Ovary (tissue), 10 donors: ENCODE measurements at regions of chrX and their contacts with region 1.

Region 1: DNA sequence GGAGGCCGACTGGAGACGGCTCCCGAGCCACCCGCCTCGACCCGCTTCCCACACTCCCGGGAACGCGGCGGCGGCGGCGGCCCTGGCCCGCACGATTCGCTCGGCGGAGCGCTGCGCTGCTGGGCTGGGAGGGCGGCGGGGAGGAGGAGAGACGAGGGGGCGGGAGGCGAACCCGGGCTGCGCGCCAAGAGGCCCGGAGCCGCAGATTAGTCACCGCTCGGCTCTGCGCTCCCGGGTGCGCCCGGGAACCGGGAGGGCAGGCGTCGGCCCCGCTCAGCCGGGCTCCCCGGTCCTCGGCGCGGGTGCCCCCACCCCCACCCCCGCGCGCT is 11.2 kb upstream of the BCOR start:
- DNase-seq: peak; percentile 82 to 86 (median 85)
- H3K4me3 ChIP-seq: peak overlapping the region; percentile 42
- H3K27ac ChIP-seq: peak overlapping the region; percentile 90 to 96
- H3K4me1 ChIP-seq: peaks cover 1% of the 10 kb centered on the region
- H3K27me3 ChIP-seq: no peaks in the 10 kb centered on the region
- CTCF ChIP-seq: no peak
- EP300 ChIP-seq: no peak
- POLR2A ChIP-seq: peak; percentile 51

Region 2: GRCh38 chrX:40146262-40147125 is 37.6 kb after region 1 on chrX:
- intact Hi-C with region 1: loop called (anchors 5 kb)
- DNase-seq: peak; percentile 51 to 62 (median 54)
- H3K4me3 ChIP-seq: peak overlapping the region; percentile 39
- H3K27ac ChIP-seq: no peak overlapping the region
- H3K4me1 ChIP-seq: peaks cover 6% of the 10 kb centered on the region
- H3K27me3 ChIP-seq: no peaks in the 10 kb centered on the region
- CTCF ChIP-seq: no peak
- EP300 ChIP-seq: no peak
- POLR2A ChIP-seq: no peak

Region 3: DNA sequence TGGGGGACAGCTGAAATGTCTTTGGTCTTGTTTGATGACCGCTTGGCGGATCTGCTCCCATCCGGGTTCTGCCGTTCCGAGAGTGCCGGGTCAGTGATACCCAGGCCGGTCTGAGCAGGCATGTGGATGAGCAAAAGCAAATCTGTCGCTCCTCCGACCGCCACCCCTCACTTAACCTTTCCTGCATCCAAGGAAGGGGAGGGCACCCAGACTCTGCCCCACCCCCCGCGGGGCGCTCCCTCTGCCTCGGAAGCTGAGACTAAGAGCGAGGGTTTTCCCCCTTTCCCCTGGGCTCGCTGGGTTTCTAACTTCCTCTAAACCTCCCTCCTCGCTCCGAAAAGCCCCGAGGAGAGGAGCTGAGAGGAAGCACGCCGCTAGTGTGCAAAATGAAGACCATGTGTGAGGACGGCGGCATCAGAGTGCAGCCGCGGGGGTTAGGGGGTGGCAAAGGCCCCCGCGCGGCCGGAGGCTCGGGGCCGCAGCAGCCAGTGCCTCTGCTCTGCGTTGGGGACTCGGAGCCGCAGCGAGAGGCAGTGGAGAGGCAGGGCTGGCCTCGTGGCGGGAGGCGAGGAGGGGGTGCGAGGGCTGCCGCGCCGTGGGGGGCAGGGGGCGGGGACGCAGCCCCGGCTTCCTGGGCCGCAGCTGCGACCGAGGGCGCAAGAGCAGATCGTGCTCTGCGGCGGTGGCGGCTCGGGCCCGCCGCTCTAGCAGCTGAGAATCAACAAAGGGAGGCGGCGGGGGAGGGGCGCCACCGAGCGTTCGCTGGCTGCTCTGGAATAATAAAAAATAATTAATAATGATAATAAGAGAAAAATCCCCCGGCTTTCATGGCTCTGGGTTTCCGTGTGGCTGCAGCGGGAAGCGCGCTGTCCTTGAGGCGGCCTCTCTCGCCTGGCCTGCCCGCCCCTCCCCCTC is 44.7 kb after region 1 on chrX:
- intact Hi-C with region 1: loop called (anchors 5 kb)
- DNase-seq: peak; percentile 51 to 74 (median 71)
- H3K4me3 ChIP-seq: peak overlapping the region; percentile 37
- H3K27ac ChIP-seq: peak overlapping the region; percentile 29 to 86
- H3K4me1 ChIP-seq: no peaks in the 10 kb centered on the region
- H3K27me3 ChIP-seq: no peaks in the 10 kb centered on the region
- CTCF ChIP-seq: no peak
- EP300 ChIP-seq: no peak
- POLR2A ChIP-seq: no peak

Region 4: DNA sequence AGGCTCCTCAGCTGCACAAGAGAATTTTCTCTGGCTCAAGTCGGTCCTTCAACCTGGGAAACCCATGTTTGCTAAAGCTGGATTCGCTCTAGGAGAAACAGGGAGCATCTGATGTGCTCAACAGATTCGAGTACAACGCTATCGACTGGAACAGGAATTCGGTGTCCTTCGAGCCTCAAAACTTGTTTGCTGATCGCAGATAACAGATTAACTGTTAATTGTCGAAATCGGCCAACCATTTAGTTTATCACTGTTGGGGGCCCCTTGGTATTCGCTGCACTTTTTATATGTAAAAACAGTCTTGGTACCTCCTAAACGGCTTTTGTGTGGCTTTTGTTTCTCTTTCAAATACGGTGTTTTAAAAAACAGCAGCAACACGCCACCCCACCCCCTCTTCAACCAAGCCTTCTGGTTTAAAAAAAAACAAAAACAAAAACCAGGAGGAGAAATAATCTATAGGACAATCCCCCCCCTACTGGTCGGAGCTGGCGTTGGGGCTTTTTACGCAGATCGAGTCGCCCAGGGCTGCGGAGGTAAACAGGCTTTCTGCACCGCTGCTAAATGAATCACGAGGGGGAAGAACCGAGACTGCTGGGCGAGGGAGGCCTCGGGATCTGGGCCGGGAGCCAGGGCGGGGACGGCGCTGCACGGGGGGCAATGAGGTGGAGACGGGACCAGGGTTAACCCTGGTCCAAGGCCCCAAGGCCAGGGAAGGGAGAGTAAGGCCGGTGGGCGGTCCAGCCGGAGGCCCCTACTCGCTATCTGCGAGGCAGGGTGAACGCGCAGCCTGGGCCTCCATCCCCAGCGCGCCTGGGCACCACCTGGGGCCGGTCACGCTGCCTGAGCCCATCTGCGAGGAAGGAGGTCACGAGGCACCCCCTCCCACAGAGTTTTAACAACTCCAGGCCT is 60.5 kb after region 1 on chrX:
- intact Hi-C with region 1: loop called in 1 of 4 experiments (anchors 5 kb)
- DNase-seq: peak; percentile 82 to 88 (median 85)
- H3K4me3 ChIP-seq: no peak overlapping the region
- H3K27ac ChIP-seq: peak overlapping the region; percentile 62 to 89
- H3K4me1 ChIP-seq: peaks cover 2% of the 10 kb centered on the region
- H3K27me3 ChIP-seq: no peaks in the 10 kb centered on the region
- CTCF ChIP-seq: peak in 2 of 3 donors; percentile 21 to 42
- EP300 ChIP-seq: no peak
- POLR2A ChIP-seq: no peak

Region 5: DNA sequence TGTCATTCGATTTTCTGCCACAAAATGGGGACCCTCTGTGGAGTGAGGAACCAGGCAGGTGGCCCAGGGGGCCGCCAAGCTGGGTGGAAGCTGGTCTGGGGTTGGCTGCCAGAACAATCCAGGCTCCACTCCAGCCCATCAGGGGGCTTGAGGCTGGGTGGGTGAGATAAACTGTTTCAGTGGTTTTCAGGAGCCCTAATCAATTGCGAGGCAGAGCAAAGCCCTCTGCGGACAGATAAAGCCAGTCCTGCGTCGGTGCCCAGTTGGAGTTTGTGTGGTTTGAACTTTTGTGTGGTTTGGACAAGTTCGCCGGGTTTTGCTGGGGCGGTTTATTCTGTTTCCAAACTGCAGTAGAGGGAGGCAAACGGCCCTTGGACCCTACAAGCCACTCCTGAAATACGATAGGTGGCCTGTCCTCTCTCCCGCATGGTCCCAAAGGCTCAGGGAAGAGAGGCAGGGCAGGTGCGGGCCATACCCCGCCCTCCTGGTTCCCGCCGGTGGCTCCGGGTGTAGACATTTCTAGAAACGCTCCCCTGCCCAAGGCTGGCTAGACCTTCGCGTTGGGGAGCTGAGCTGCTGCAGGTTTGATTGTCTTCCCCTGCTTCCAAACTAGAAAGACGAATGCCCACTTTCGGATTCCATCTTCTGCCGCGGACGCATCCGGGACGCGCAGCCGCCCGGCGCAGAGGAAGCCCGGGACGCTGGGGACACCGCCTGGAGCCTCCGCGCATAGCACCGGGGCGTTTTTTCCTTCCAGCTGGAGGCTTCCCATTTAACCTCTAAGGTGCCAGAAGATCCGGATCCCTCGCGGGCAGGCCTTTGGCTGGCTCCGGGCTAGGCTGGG is 157.8 kb after region 1 on chrX:
- intact Hi-C with region 1: loop called in 1 of 4 experiments (anchors 10 kb)
- DNase-seq: peak; percentile 61 to 83 (median 75)
- H3K4me3 ChIP-seq: peak overlapping the region; percentile 42
- H3K27ac ChIP-seq: peak overlapping the region in 1 of 2 donors; percentile 72
- H3K4me1 ChIP-seq: peaks cover 6% of the 10 kb centered on the region
- H3K27me3 ChIP-seq: no peaks in the 10 kb centered on the region
- CTCF ChIP-seq: peak; percentile 43 to 59 (median 51)
- EP300 ChIP-seq: no peak
- POLR2A ChIP-seq: no peak

Region 6: DNA sequence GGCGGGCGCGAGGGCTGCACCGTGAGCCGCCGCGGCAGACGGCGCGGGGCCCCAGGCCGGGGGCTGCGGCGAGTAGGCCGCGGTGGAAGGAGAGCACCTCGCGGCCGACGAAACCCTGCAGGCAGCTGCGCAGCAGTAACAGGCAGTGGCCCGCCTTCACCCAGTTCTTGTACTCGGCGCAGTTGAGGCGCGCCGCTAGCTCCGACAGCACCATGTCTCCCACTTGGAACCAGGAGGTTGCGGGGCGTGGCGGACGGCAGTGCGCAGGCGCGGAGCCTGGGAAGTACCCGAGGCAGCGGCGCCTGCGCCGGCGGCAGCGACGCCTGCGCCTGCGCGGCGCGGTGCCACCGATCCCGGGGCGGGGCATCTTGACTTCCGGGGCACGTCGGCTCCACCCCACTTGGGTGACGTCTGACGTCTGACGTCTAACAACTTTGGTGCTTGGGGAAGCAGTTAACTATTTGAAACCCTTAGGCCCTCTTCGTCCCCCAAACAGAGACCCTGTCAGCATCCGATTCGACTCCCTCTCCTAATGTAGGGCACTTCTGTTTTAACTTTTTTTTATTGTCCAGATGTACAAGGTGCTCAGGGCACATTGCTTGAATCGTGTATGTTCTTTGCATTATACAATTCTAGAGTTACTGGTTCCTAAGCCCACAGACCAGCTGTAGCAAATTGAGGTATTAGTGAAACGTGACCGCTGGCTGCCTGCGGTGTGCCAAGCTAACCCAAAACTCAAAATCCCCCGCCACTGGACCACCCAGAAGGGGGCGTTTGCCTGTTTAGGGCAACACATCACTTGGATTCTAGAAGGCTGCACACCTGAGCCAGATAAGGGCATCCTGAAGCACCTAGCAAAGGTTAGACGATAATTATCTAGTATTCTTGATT is 538.6 kb after region 1 on chrX and contains the start of gene CXorf38:
- intact Hi-C with region 1: no loop called
- DNase-seq: peak; percentile 94 to 99 (median 97)
- H3K4me3 ChIP-seq: peak within 1 kb of the TSS; percentile 89
- H3K27ac ChIP-seq: peak within 1 kb of the TSS in 1 of 2 donors; percentile 69
- H3K4me1 ChIP-seq: peaks cover 6% of the 10 kb centered on the region
- H3K27me3 ChIP-seq: no peaks in the 10 kb centered on the region
- CTCF ChIP-seq: no peak
- EP300 ChIP-seq: no peak
- POLR2A ChIP-seq: peak; percentile 48
- total RNA-seq, gene CXorf38: 12.3 to 14.7 (median 13.2) TPM